Dorsolateral prefrontal cortex (tissue), 120 donors: ENCODE measurements at regions of chr9 and their contacts with region 1.

Region 1: DNA sequence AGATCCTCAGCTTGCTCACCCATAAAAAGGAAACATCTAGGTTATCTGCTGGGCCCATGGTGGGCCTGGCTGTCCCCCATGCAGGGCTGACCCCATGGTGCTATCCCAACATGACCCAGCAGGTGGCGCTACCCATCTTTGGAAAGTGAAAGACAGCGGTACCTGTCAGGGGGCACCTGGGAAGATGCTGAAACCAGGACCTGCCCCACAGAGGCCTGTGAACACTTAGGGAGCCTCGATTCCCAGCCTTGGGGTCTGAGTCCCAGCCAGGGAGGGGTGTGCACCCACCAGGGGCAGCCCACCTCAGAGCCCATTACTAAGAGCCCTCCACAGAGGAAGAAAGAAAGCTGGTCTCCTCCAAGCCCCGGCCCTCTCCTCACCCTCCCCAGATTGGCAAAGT is 46.6 kb upstream of the IPPK start:
- DNase-seq: peak in 7 of 10 donors; percentile 59 to 72 (median 66)
- H3K4me3 ChIP-seq: no peak overlapping the region
- H3K27ac ChIP-seq: no peak overlapping the region
- H3K27me3 ChIP-seq: no peaks in the 10 kb centered on the region
- CTCF ChIP-seq: peak; percentile 63 to 98 (median 92)

Region 2: DNA sequence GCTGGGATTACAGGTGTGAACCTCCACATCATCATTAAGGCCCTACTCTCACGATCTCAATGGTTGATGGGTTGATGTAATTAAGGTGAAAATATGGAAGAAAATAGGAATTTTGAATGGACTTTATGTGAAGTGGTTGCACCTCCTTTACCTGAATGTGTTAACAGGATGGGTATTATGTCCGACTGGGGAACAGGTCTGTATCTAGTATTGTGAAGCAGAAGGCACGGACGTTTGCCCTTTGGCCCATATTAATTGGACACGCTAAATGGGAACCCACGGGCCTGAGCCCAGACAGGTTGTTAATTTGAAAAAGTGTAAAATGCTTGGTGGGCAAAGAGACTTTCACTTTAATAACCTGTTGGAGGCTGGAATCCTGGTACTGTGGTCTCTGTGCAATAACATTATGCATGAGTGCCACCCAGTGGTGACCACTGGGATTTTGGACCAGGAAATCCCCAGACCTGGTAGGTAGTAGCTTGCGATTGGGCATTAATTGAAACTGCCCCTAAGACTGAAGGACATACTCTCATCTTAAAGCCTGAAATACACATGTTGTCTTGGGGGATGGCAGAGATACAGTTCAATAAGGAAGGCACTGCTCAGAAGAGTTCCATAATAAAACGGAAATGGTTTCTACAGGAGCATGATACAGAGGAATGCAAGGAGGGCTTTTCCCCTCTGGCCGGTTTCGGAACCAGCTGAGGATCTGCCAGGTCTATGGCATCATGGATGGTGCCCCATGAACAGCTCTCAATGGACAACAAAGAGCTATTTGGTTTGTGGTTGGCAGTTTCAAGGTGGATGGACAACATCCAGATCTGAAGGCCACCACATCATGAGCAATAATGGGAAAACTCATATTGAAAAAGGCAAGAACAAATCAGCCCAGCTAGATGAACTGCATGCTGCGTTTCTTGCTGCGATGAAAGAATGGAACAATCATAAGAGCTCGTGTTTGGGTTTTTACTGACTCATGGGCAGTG is 74.3 kb after region 1 on chr9:
- intact Hi-C with region 1: loop called (anchors 1 to 2 kb)
- DNase-seq: peak; percentile 70 to 90 (median 80)
- H3K4me3 ChIP-seq: peak overlapping the region in 30 of 59 donors; percentile 4 to 53 (median 30)
- H3K27ac ChIP-seq: no peak overlapping the region
- H3K27me3 ChIP-seq: peaks cover 0 to 4% (median 0%) of the 10 kb centered on the region in 45 donors
- CTCF ChIP-seq: peak; percentile 73 to 98 (median 88)